Activated B cell treated with CpG ODN at 0.5 μM for 24 hours (primary cell): ENCODE measurements at regions of chrX and their contacts with region 1.

Region 1: GRCh38 chrX:37787423-37787869 is 7.6 kb downstream of the CYBB start:
- DNase-seq: no peak
- ATAC-seq: peak; percentile 71
- H3K4me3 Mint-ChIP-seq: peak overlapping the region; percentile 77
- H3K27ac Mint-ChIP-seq: peak overlapping the region; percentile 97
- H3K4me1 Mint-ChIP-seq: peaks cover 79% of the 10 kb centered on the region
- H3K27me3 Mint-ChIP-seq: no peaks in the 10 kb centered on the region
- CTCF ChIP-seq: no peak

Region 2: DNA sequence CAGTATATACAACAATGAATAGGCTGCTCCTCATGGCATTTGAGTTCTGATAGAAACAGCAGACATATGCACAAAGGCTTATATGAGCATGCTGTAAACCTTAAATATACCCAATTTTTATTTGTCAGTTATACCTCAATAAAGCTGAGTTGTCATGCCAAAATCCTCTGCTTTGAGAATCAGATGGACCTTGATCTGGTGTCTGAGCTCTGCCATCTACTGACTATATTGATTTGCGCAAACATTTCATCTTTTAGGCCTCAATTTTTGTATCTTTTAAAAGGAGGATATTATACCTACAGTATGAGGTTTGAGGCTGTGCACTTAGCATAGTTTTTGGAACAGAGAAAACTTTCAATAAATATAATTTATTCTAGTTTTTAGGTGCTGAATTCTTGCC is 353.1 kb before region 1 on chrX:
- CTCF ChIA-PET with region 1: no interaction called
- POLR2A ChIA-PET with region 1: no interaction called
- intact Hi-C with region 1: no loop called
- DNase-seq: no peak
- ATAC-seq: no peak
- H3K4me3 Mint-ChIP-seq: no peak overlapping the region
- H3K27ac Mint-ChIP-seq: no peak overlapping the region
- H3K4me1 Mint-ChIP-seq: no peaks in the 10 kb centered on the region
- H3K27me3 Mint-ChIP-seq: no peaks in the 10 kb centered on the region
- CTCF ChIP-seq: no peak

Region 3: DNA sequence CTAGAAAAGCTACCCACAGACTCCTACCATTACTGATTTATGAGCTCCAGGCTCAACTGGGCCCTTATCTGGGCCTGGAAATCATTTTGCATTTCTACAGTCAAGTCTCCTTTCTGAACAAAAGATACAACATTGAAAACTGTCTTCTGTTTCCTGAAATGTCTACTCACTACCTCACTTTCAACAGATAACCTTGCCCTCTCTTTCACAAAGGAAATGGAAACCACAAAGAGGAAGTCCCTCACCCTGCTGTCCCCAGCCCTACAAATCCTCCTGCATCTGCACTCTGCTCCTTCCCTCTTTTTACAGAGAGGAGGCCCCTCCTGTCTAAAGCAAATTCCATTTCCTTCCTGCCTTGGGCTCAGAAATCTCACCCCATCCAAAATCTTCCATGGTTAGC is 32.4 kb before region 1 on chrX:
- CTCF ChIA-PET with region 1: no interaction called
- POLR2A ChIA-PET with region 1: interaction called, 27 read pairs
- intact Hi-C with region 1: loop called (anchors 1 kb)
- DNase-seq: no peak
- ATAC-seq: peak; percentile 93
- H3K4me3 Mint-ChIP-seq: no peak overlapping the region
- H3K27ac Mint-ChIP-seq: no peak overlapping the region
- H3K4me1 Mint-ChIP-seq: peaks cover 37% of the 10 kb centered on the region
- H3K27me3 Mint-ChIP-seq: no peaks in the 10 kb centered on the region
- CTCF ChIP-seq: no peak

Region 4: GRCh38 chrX:37767430-37767829 is 20.0 kb before region 1 on chrX:
- CTCF ChIA-PET with region 1: no interaction called
- POLR2A ChIA-PET with region 1: interaction called, 14 read pairs
- intact Hi-C with region 1: no loop called
- DNase-seq: no peak
- ATAC-seq: peak; percentile 31
- H3K4me3 Mint-ChIP-seq: no peak overlapping the region
- H3K27ac Mint-ChIP-seq: peak overlapping the region; percentile 66
- H3K4me1 Mint-ChIP-seq: peaks cover 53% of the 10 kb centered on the region
- H3K27me3 Mint-ChIP-seq: no peaks in the 10 kb centered on the region
- CTCF ChIP-seq: no peak

Region 5: GRCh38 chrX:37776283-37776986 is 11.0 kb before region 1 on chrX:
- CTCF ChIA-PET with region 1: interaction called, 6 read pairs
- POLR2A ChIA-PET with region 1: interaction called, 55 read pairs
- intact Hi-C with region 1: loop called (anchors 1 kb)
- DNase-seq: no peak
- ATAC-seq: peak; percentile 73
- H3K4me3 Mint-ChIP-seq: peak overlapping the region; percentile 50
- H3K27ac Mint-ChIP-seq: peak overlapping the region; percentile 87
- H3K4me1 Mint-ChIP-seq: peaks cover 33% of the 10 kb centered on the region
- H3K27me3 Mint-ChIP-seq: no peaks in the 10 kb centered on the region
- CTCF ChIP-seq: no peak

Region 6: DNA sequence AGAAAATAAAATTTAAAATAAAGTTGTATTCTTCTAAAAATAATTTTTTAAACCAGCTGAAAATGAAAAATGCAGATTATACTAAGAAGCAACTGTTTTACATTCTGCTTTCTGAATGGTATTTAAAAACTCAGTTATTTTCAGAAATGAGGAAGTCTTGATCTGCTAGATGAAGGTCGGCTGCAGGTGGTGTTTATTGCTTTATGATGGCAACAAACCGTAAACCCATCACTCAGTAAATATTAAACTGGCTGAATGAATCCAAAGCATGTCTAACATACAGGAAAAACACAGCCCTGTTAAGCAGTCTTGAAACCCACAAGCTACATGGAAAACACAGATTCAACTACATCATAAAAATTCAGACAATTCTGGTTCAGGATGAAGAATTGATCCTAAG is 30.6 kb after region 1 on chrX:
- CTCF ChIA-PET with region 1: interaction called, 34 read pairs
- POLR2A ChIA-PET with region 1: interaction called, 155 read pairs
- intact Hi-C with region 1: loop called (anchors 1 kb)
- DNase-seq: no peak
- ATAC-seq: peak; percentile 48
- H3K4me3 Mint-ChIP-seq: peak overlapping the region; percentile 78
- H3K27ac Mint-ChIP-seq: peak overlapping the region; percentile 93
- H3K4me1 Mint-ChIP-seq: peaks cover 81% of the 10 kb centered on the region
- H3K27me3 Mint-ChIP-seq: no peaks in the 10 kb centered on the region
- CTCF ChIP-seq: no peak

Region 7: DNA sequence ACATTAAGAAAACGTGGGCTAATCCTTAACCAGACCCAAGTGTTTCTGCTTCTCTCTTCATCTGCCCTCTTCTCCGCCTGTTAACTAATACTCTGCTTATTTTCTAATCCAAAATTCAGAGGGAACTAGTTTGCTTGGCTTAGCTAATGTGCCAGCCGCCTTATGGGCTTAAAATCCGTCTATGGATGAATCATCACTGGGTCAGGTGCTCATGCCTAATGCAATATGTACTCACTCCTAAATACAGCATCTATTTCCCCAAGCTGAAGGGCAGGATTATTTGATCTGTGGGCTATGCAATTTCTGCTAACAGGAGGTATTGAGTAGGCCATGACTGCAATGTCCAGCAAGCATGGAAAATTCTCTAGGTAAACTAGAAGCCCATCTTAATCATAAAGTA is 47.5 kb after region 1 on chrX:
- CTCF ChIA-PET with region 1: no interaction called
- POLR2A ChIA-PET with region 1: no interaction called
- intact Hi-C with region 1: no loop called
- DNase-seq: no peak
- ATAC-seq: no peak
- H3K4me3 Mint-ChIP-seq: no peak overlapping the region
- H3K27ac Mint-ChIP-seq: no peak overlapping the region
- H3K4me1 Mint-ChIP-seq: no peaks in the 10 kb centered on the region
- H3K27me3 Mint-ChIP-seq: no peaks in the 10 kb centered on the region
- CTCF ChIP-seq: no peak

Region 8: DNA sequence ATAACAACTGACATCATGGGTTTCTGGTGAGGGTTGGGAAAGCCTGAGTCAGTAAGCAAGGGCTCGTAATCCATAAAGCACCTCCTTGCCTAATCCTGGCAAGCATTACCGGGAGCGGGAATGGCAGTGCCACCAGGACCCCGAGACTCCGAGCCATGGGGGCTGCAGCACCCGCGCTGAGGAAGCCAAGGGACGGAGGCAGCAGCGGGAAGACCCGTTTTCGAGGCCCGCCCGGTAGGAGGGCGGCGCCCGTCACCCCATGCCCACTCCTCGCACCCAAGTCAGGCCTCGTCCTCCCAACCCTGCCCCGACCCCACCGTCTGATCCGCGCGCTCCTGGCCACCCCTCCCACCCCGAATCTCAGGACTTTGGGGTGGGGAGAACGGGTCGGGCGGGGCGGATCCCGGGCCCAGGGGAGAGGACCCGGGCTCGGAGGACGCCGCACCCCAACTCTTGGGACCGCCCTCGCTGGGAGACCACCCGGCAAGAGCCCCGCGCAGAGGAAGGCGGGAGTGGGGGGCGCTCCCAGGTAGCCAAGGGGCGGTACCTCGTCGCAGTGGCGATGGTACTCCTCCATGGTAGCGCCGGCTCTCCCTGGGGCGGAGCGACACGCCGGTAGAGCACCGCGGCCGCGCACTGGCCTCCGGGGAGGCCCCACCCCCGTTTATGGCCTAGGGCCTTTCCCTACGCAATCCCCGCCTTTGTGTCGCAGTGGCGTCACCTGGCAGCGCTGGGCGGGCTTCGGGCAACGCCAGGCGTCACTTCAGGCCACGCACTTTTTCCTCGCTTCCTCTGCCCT is 59.7 kb after region 1 on chrX and contains the start of gene DYNLT3:
- CTCF ChIA-PET with region 1: no interaction called
- POLR2A ChIA-PET with region 1: no interaction called
- intact Hi-C with region 1: loop called (anchors 1 kb)
- DNase-seq: peak; percentile 72
- ATAC-seq: peak; percentile 99
- H3K4me3 Mint-ChIP-seq: peak within 1 kb of the TSS; percentile 81
- H3K27ac Mint-ChIP-seq: peak within 1 kb of the TSS; percentile 86
- H3K4me1 Mint-ChIP-seq: peaks cover 20% of the 10 kb centered on the region
- H3K27me3 Mint-ChIP-seq: no peaks in the 10 kb centered on the region
- CTCF ChIP-seq: no peak
- total RNA-seq, gene DYNLT3: 17.7 and 19.1 TPM in 2 replicates